ENCODE measurements at regions of chr12 and their contacts with region 1.

Region 1: DNA sequence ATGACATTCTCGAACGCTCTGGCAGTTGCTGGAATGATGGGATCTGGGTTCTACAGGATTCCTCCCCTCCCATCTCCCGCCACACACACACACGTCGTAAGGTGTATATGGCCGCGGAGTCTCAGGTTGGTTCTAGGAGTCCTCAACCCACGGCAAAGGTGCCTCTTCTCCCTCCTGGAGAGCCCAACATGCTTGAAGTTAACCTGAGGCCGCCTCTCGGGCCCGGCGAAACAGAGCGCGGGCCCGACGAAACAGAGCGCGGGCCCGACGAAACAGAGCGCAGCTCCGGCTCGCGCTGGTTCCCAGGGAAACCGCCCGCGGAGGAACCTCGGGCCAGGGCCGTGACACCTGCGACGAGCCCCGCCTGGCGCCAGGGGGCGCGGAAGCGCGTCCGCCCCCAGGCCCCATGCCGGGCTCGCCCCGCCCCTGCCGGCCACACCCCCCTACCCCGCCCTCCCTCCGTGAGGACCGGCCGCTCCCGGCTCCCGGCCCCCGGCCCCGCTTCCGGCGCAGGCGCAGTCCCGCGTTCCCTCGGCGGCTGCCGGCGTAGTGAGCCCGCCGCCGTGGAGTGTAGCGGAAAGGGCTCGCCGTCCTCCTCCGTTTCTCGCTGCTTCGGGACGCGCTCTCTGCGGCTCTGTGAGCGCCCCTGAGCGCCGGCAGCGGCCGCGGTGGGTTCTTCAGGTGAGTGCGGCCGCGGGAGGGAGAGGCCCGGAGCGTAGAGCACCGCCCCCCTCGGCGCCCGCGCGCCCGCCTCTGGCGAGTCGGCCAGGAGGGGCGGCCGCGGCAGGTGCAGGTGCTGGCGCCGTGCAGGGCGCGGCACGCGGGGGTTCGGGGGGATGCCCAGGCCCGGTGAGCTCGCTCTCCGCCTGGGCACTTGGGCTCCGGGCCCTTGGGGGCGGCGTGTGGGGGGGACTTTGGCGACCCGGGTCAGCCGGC is at the start of gene RAB3IP:
- DNase-seq: peak; percentile 93
- ATAC-seq: peak; percentile 90
- H3K4me3 Mint-ChIP-seq: peak within 1 kb of the TSS; percentile 85
- H3K27ac Mint-ChIP-seq: peak within 1 kb of the TSS; percentile 73
- H3K4me1 Mint-ChIP-seq: peaks cover 19% of the 10 kb centered on the region
- H3K27me3 Mint-ChIP-seq: peaks cover 4% of the 10 kb centered on the region
- CTCF ChIP-seq: no peak
- total RNA-seq, gene RAB3IP: 34.6 and 37.9 TPM in 2 replicates

Region 2: GRCh38 chr12:69470189-69471075 is 268.2 kb before region 1 on chr12 and contains the start of gene FRS2:
- CTCF ChIA-PET with region 1: no interaction called
- POLR2A ChIA-PET with region 1: no interaction called
- intact Hi-C with region 1: loop called (anchors 5 kb)
- DNase-seq: peak; percentile 77
- ATAC-seq: peak; percentile 98
- H3K4me3 Mint-ChIP-seq: peak within 1 kb of the TSS; percentile 99
- H3K27ac Mint-ChIP-seq: peak within 1 kb of the TSS; percentile 95
- H3K4me1 Mint-ChIP-seq: peaks cover 77% of the 10 kb centered on the region
- H3K27me3 Mint-ChIP-seq: no peaks in the 10 kb centered on the region
- CTCF ChIP-seq: no peak
- total RNA-seq, gene FRS2: 23.2 and 23.8 TPM in 2 replicates

Measured in activated B cell treated with CpG ODN at 0.5 μM for 24 hours (primary cell).